Calu3 (cell line): ENCODE measurements at regions of chr20 and their contacts with region 1.

Region 1: DNA sequence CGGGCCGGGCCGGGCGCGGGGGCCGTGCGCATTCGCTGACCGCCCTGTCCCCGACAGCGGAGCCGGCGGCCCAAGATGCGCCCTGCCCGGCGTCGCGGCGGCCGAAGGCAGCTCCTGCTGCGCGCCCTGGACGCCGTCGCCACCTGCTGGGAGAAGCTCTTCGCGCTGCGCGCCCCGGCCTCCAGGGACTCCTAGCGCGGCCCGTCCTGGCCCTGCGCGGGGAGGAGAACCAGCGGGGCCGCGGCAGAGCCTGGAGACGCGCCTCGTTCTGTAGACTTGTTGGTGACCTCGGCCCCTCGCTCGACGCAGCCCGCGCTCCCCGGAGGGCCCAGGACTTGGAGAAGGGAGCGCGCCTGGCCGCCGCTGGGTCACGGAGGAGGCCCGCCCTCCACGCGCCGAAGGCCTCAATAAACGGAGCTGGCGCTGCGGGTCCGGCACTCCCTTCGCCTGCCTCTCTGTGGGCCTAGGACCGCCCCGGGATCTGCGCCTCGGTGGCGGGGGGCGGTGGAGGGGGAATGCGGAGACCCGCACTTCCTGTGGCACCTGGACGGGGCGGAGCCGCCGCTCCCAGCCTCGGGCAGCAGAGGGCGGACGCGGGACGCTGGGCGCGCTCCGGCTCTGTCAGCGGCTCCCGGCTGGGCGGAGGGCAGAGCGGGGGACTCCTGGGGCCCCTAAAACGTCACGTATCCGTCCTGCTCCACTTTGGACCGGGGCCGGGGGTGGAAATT is 2.7 kb downstream of the C20orf204 start:
- DNase-seq: peak; percentile 94
- H3K4me3 Mint-ChIP-seq: peak overlapping the region; percentile 77
- H3K27ac Mint-ChIP-seq: no peak overlapping the region
- H3K4me1 Mint-ChIP-seq: peaks cover 6% of the 10 kb centered on the region
- H3K27me3 Mint-ChIP-seq: peaks cover 40% of the 10 kb centered on the region
- CTCF ChIP-seq: no peak

Region 2: GRCh38 chr20:63980806-63981728 is 57.7 kb before region 1 on chr20 and contains the start of gene PRPF6:
- CTCF ChIA-PET with region 1: interaction called, 26 read pairs
- intact Hi-C with region 1: no loop called
- DNase-seq: peak; percentile 99
- H3K4me3 Mint-ChIP-seq: peak within 1 kb of the TSS; percentile 81
- H3K27ac Mint-ChIP-seq: peak within 1 kb of the TSS; percentile 87
- H3K4me1 Mint-ChIP-seq: peaks cover 49% of the 10 kb centered on the region
- H3K27me3 Mint-ChIP-seq: no peaks in the 10 kb centered on the region
- CTCF ChIP-seq: peak; percentile 95
- total RNA-seq, gene PRPF6: 111 and 113 TPM in 2 replicates

Region 3: DNA sequence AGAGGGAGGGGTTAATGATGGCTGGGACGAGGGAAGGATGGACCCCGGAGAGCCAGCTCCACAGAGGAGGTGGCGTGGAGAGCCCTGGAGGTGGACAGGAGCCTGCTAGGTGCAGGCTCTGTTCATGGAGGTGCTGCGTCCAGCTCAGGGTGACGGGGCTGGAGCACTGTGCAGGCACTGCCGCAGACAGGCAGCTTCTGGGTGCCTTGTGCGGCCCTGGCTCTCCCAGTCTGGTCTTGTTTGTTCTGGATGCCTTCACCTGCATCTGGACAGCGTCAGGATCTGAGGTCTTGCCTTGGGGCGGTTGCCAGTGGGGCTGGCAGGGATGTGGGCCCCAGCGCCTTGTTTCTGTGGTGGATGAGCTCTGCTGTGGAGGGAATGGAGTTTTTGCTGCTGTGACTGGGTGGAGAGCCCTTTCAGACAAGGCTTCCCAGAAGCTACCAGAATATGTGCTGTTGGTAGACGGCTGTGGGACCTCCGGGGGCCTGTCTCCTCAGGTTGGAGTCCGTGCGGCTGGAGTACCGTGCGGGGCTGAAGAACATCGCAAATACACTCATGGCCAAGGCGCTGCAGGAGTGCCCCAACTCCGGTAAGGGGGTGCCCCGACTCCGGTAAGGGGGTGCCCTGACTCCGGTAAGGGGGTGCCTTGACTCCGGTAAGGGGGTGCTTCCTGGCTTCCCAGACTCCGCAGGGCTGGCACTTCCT is 10.6 kb before region 1 on chr20:
- CTCF ChIA-PET with region 1: interaction called, 10 read pairs
- intact Hi-C with region 1: no loop called
- DNase-seq: no peak
- H3K4me3 Mint-ChIP-seq: no peak overlapping the region
- H3K27ac Mint-ChIP-seq: no peak overlapping the region
- H3K4me1 Mint-ChIP-seq: no peaks in the 10 kb centered on the region
- H3K27me3 Mint-ChIP-seq: no peaks in the 10 kb centered on the region
- CTCF ChIP-seq: no peak

Region 4: DNA sequence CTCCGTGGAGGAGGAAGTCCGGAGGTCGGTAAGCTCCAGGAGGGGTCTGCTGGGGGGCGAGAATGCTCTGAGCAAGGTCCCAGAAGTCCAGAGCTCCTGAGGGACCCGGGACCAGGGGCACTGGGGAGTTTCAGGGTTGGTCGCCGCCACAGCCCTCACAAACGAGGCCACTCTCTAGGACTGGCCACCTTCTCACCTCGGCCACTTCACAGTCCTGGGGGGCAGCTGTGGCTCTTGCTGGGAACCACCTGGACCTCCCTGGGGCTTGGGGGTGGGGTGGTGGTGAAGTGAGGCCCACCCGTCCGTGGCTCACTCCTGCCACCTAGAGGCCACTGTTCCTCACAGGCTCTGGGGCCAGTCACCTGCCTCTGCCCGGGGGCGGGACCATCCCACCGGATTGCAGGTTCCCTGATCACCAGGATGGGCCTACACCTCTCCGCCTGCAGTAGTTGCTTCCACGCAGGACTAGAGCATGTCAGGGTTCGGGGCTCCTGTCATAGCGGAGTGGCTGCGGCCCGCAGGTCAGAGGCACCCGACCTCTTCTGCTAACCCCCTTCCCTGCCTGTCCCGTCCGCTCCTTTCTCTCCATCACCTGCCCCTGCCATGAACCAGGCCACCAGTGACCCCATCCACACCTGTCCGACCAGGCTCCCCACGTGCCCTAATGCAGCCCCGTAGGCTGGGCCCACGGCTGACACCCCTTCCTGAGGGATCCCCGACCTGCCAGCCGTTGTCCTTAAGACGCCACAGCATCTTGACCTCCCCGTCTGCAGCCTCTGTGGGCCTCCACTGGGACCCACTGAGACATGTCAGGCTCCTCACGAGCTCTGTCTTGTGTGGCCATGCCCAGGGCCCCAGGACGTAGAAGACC is 19.1 kb after region 1 on chr20:
- CTCF ChIA-PET with region 1: interaction called, 13 read pairs
- intact Hi-C with region 1: no loop called
- DNase-seq: peak; percentile 96
- H3K4me3 Mint-ChIP-seq: peak overlapping the region; percentile 49
- H3K27ac Mint-ChIP-seq: no peak overlapping the region
- H3K4me1 Mint-ChIP-seq: peaks cover 25% of the 10 kb centered on the region
- H3K27me3 Mint-ChIP-seq: peaks cover 32% of the 10 kb centered on the region
- CTCF ChIP-seq: peak; percentile 93

Region 5: DNA sequence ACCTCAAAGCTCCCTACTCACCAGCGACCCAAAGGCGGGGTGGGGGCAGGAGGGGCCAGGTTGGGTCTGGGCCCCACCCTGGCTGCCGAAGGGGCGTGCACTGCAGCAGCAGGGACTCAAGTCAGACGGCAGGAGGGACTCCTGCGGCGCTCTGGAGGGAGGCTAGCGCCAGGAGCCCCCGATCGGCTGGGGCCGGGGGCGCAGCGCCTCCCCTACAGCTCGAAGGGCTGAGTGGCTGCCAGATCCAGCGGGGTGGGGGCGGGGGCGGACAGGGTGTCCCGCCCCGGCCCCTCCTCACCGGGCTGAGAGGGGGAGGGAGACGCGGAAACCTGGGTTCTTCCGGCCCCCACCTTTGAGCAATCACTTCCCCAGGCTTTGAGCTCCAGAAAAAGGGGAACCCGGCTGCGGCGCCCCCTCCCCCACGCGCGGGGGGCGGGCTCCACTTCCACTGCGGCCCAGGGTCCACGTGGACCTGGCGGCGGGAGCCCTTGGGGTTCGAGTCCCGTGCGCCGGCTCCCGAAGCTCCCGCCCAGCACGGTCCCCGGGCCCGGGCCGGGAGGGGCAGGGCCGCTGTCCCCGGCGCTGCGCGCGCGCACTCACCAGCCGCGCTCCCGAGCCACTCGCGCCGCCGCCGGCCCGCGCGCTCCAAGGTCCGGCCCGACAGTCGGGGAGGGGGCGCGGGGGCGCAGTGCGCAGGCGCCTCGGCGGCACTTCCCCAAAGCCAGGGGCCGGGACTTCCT is 40.7 kb after region 1 on chr20 and contains the start of gene RGS19:
- CTCF ChIA-PET with region 1: interaction called, 11 read pairs
- intact Hi-C with region 1: no loop called
- DNase-seq: peak; percentile 86
- H3K4me3 Mint-ChIP-seq: peak within 1 kb of the TSS; percentile 82
- H3K27ac Mint-ChIP-seq: peak within 1 kb of the TSS; percentile 68
- H3K4me1 Mint-ChIP-seq: peaks cover 32% of the 10 kb centered on the region
- H3K27me3 Mint-ChIP-seq: peaks cover 44% of the 10 kb centered on the region
- CTCF ChIP-seq: no peak
- total RNA-seq, gene RGS19: 17.2 and 17.8 TPM in 2 replicates

Region 6: DNA sequence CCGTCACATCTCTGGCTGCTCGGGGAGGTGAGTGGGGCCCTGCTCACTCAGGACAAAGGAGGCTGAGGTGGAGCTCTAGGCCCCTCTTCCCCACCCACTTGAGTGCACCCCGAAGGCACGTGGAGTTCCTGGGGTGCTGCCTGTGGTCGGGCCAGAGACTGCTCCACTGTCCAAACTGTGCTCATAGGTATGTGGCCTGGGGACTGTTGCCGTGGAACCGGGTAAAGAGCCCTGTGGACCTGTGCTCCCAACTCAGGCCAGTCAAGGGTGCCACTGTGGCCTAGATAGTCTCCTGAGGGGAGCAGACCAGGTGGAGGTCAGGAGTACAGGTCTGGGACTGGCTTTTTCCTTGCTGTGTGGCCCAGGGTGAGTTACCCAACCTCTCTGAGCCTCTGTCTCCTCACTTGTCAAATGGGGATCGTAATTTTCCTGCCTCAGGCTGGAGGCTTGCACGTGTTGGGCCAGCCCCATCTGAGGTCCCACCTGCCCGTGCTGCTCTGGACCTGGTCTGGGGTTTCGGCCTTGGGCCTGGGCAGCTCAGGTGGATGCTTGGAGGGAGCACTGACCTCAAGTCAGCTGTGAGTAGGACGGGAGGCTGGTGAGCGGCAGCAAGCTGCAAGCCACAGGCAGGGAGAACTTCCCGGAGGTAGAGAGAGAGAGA is 81.1 kb after region 1 on chr20:
- CTCF ChIA-PET with region 1: interaction called, 33 read pairs
- intact Hi-C with region 1: loop called (anchors 5 kb)
- DNase-seq: no peak
- H3K4me3 Mint-ChIP-seq: peak overlapping the region; percentile 1
- H3K27ac Mint-ChIP-seq: no peak overlapping the region
- H3K4me1 Mint-ChIP-seq: peaks cover 8% of the 10 kb centered on the region
- H3K27me3 Mint-ChIP-seq: peaks cover 66% of the 10 kb centered on the region
- CTCF ChIP-seq: no peak